ENCODE measurements at regions of chr20 and their contacts with region 1.

Region 1: GRCh38 chr20:32139946-32140345 is 30.4 kb downstream of the TM9SF4 start:
- DNase-seq: no peak
- ATAC-seq: no peak
- H3K4me3 ChIP-seq: no peak overlapping the region
- H3K27ac ChIP-seq: no peak overlapping the region
- H3K4me1 ChIP-seq: no peaks in the 10 kb centered on the region
- H3K27me3 ChIP-seq: no peaks in the 10 kb centered on the region
- CTCF ChIP-seq: no peak

Region 2: GRCh38 chr20:32179515-32179914 is 39.6 kb after region 1 on chr20:
- intact Hi-C with region 1: loop called in 1 of 2 experiments (anchors 2 kb)
- DNase-seq: peak in 1 of 2 donors; percentile 15
- ATAC-seq: no peak
- H3K4me3 ChIP-seq: no peak overlapping the region
- H3K27ac ChIP-seq: no peak overlapping the region
- H3K4me1 ChIP-seq: no peaks in the 10 kb centered on the region
- H3K27me3 ChIP-seq: no peaks in the 10 kb centered on the region
- CTCF ChIP-seq: no peak